OCI-LY7 (cell line): ENCODE measurements at regions of chr4 and their contacts with region 1.

Region 1: DNA sequence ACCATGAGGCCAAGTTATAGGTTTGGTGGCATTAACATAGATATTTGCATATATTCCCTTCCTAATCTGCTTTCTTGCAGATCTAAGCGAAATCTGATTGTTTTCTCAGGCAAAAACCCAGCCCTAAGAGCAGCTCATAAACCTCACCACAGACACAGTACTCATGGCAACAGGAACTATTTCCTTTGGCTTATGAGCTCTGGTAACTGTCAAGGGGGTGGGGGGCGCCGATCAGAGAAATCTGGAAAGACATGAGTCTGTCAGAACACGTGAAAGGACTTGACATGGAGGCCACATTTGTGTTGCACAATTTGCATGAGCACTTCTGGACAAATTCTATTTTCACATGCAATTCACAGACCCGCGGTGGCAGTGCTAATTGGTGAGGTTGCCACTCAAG is 83.7 kb downstream of the MGST2 start:
- DNase-seq: no peak
- H3K4me3 ChIP-seq: no peak overlapping the region
- H3K27ac ChIP-seq: no peak overlapping the region
- H3K4me1 ChIP-seq: no peaks in the 10 kb centered on the region
- CTCF ChIP-seq: no peak

Region 2: GRCh38 chr4:138796752-138797151 is 952.6 kb before region 1 on chr4:
- CTCF ChIA-PET with region 1: no interaction called
- POLR2A ChIA-PET with region 1: no interaction called
- intact Hi-C with region 1: no loop called
- DNase-seq: no peak
- H3K4me3 ChIP-seq: no peak overlapping the region
- H3K27ac ChIP-seq: no peak overlapping the region
- H3K4me1 ChIP-seq: no peaks in the 10 kb centered on the region
- CTCF ChIP-seq: no peak

Region 3: GRCh38 chr4:139734875-139735380 is 14.4 kb before region 1 on chr4:
- CTCF ChIA-PET with region 1: interaction called, 12 read pairs
- POLR2A ChIA-PET with region 1: no interaction called
- intact Hi-C with region 1: no loop called
- DNase-seq: peak; percentile 20
- H3K4me3 ChIP-seq: no peak overlapping the region
- H3K27ac ChIP-seq: no peak overlapping the region
- H3K4me1 ChIP-seq: peaks cover 5% of the 10 kb centered on the region
- CTCF ChIP-seq: peak; percentile 47; the same call in 1 of the 2 replicates